Heart left ventricle (tissue), 16 donors: ENCODE measurements at regions of chr11 and their contacts with region 1.

Region 1: GRCh38 chr11:120344302-120345004 is 8.2 kb downstream of the ARHGEF12 start:
- DNase-seq: no peak
- ATAC-seq: no peak
- H3K4me3 ChIP-seq: no peak overlapping the region
- H3K27ac ChIP-seq: no peak overlapping the region
- H3K4me1 ChIP-seq: peaks cover 14 to 99% (median 79%) of the 10 kb centered on the region in 12 donors
- H3K27me3 ChIP-seq: peaks cover 0 to 56% (median 0%) of the 10 kb centered on the region in 9 donors
- CTCF ChIP-seq: no peak
- POLR2A ChIP-seq: no peak

Region 2: GRCh38 chr11:120197251-120197891 is 147.1 kb before region 1 on chr11:
- intact Hi-C with region 1: no loop called
- DNase-seq: peak in 2 of 5 donors; percentile 30 to 31
- ATAC-seq: peak; percentile 60 to 74 (median 66)
- H3K4me3 ChIP-seq: no peak overlapping the region
- H3K27ac ChIP-seq: peak overlapping the region in 6 of 12 donors; percentile 22 to 57 (median 36)
- H3K4me1 ChIP-seq: peaks cover 0 to 14% (median 0%) of the 10 kb centered on the region in 12 donors
- H3K27me3 ChIP-seq: no peaks in the 10 kb centered on the region
- CTCF ChIP-seq: no peak
- POLR2A ChIP-seq: no peak

Region 3: GRCh38 chr11:120391292-120391691 is 46.8 kb after region 1 on chr11:
- intact Hi-C with region 1: loop called in 4 of 10 experiments (anchors 5 to 10 kb)
- DNase-seq: peak in 1 of 5 donors; percentile 17
- ATAC-seq: peak in 3 of 4 donors; percentile 45 to 78 (median 48)
- H3K4me3 ChIP-seq: no peak overlapping the region
- H3K27ac ChIP-seq: peak overlapping the region in 10 of 12 donors; percentile 2 to 62 (median 40)
- H3K4me1 ChIP-seq: peaks cover 9 to 56% (median 32%) of the 10 kb centered on the region in 12 donors
- H3K27me3 ChIP-seq: no peaks in the 10 kb centered on the region
- CTCF ChIP-seq: no peak
- POLR2A ChIP-seq: no peak

Region 4: GRCh38 chr11:120400564-120401364 is 56.3 kb after region 1 on chr11:
- intact Hi-C with region 1: loop called in 7 of 10 experiments (anchors 5 to 10 kb)
- DNase-seq: no peak
- ATAC-seq: peak in 3 of 4 donors; percentile 84 to 93 (median 88)
- H3K4me3 ChIP-seq: peak overlapping the region in 4 of 12 donors; percentile 5 to 12 (median 10)
- H3K27ac ChIP-seq: peak overlapping the region in 7 of 12 donors; percentile 17 to 60 (median 44)
- H3K4me1 ChIP-seq: peaks cover 6 to 86% (median 64%) of the 10 kb centered on the region in 12 donors
- H3K27me3 ChIP-seq: no peaks in the 10 kb centered on the region
- CTCF ChIP-seq: no peak
- POLR2A ChIP-seq: no peak

Region 5: DNA sequence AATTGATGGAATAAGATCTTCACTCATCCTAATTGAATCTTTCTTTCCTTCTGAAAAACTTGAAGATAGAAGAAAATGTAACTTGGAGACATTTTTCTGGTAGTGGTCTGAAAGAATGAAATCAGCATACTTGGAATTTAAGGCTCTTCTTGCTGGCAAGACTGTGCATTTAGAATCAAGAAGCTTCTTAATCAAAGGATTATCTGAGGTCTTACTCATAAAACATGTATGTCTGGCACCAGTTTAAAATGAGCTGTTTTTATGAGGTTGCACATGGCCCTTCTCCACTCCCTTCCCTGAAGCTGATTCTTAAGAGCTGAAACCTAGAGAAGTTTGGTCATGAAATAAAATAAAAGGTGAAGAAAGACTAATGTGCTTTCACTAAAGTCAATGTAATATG is 69.0 kb after region 1 on chr11:
- intact Hi-C with region 1: loop called in 1 of 10 experiments (anchors 10 kb)
- DNase-seq: no peak
- ATAC-seq: no peak
- H3K4me3 ChIP-seq: no peak overlapping the region
- H3K27ac ChIP-seq: no peak overlapping the region
- H3K4me1 ChIP-seq: peaks cover 0 to 12% (median 0%) of the 10 kb centered on the region in 12 donors
- H3K27me3 ChIP-seq: no peaks in the 10 kb centered on the region
- CTCF ChIP-seq: no peak
- POLR2A ChIP-seq: no peak